Prostate gland (tissue), 2 donors: ENCODE measurements at regions of chr3 and their contacts with region 1.

Region 1: GRCh38 chr3:9749645-9750555 is at the start of gene OGG1:
- DNase-seq: peak; percentile 99
- H3K4me3 ChIP-seq: peak within 1 kb of the TSS; percentile 48 to 55
- H3K27ac ChIP-seq: peak within 1 kb of the TSS; percentile 92 to 93
- H3K4me1 ChIP-seq: no peaks in the 10 kb centered on the region
- H3K27me3 ChIP-seq: no peaks in the 10 kb centered on the region
- CTCF ChIP-seq: peak in 2 of 4 experiments; percentile 23 to 36
- POLR2A ChIP-seq: peak; percentile 46
- total RNA-seq, gene OGG1: 22.6 to 38.2 TPM

Region 2: GRCh38 chr3:9792405-9793160 is 42.7 kb after region 1 on chr3 and contains the starts of genes ARPC4 and TADA3:
- intact Hi-C with region 1: loop called (anchors 1 kb)
- DNase-seq: peak; percentile 93
- H3K4me3 ChIP-seq: peak within 1 kb of the TSS; percentile 92 to 97
- H3K27ac ChIP-seq: peak within 1 kb of the TSS; percentile 95 to 96
- H3K4me1 ChIP-seq: no peaks in the 10 kb centered on the region
- H3K27me3 ChIP-seq: no peaks in the 10 kb centered on the region
- CTCF ChIP-seq: peak in 2 of 4 experiments; percentile 45 to 48
- POLR2A ChIP-seq: peak; percentile 38
- total RNA-seq, gene ARPC4: 121 to 152 TPM
- total RNA-seq, gene TADA3: 130 to 131 TPM